ENCODE measurements at regions of chr5 and their contacts with region 1.

Region 1: GRCh38 chr5:39194466-39195136 is 24.8 kb downstream of the FYB1 start:
- DNase-seq: peak; percentile 52
- ATAC-seq: peak; percentile 24
- H3K4me3 Mint-ChIP-seq: peak overlapping the region; percentile 72
- H3K27ac Mint-ChIP-seq: peak overlapping the region; percentile 96
- H3K4me1 Mint-ChIP-seq: peaks cover 74% of the 10 kb centered on the region
- H3K27me3 Mint-ChIP-seq: no peaks in the 10 kb centered on the region

Region 2: GRCh38 chr5:38707352-38708210 is 487.0 kb before region 1 on chr5:
- CTCF ChIA-PET with region 1: no interaction called
- POLR2A ChIA-PET with region 1: no interaction called
- intact Hi-C with region 1: no loop called
- DNase-seq: no peak
- ATAC-seq: no peak
- H3K4me3 Mint-ChIP-seq: no peak overlapping the region
- H3K27ac Mint-ChIP-seq: no peak overlapping the region
- H3K4me1 Mint-ChIP-seq: no peaks in the 10 kb centered on the region
- H3K27me3 Mint-ChIP-seq: peaks cover 2% of the 10 kb centered on the region

Region 3: DNA sequence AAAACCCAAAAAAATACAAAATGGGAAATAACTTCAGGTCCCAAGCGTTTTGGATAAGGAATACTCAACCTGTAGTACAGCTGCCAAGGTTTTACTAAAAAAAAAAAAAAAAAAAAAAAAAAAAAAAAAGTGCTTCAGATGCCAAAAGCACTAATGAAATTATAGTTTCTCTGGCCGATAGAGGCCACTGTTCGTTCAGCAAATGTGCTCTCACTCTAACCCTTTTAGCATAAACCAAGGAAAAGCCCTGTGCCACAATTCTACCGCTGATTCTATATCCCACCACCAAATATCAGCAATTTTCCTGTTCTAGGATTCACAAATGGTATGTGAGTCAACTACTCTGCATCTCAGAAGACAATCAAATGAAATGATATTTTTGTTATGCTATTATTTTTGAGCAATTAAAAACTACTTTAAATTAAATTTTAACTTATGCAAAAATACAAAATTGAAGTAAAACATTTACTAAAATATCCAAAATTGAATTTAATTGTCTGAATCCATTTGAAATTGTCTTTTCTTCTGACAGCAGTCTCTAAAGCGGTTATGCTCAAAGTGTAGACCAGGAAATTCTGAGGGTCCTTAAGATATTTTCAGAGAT is 200.2 kb before region 1 on chr5:
- CTCF ChIA-PET with region 1: no interaction called
- POLR2A ChIA-PET with region 1: no interaction called
- intact Hi-C with region 1: loop called in 1 of 2 experiments (anchors 5 kb)
- DNase-seq: peak; percentile 31
- ATAC-seq: peak; percentile 36
- H3K4me3 Mint-ChIP-seq: no peak overlapping the region
- H3K27ac Mint-ChIP-seq: no peak overlapping the region
- H3K4me1 Mint-ChIP-seq: peaks cover 4% of the 10 kb centered on the region
- H3K27me3 Mint-ChIP-seq: no peaks in the 10 kb centered on the region

Region 4: DNA sequence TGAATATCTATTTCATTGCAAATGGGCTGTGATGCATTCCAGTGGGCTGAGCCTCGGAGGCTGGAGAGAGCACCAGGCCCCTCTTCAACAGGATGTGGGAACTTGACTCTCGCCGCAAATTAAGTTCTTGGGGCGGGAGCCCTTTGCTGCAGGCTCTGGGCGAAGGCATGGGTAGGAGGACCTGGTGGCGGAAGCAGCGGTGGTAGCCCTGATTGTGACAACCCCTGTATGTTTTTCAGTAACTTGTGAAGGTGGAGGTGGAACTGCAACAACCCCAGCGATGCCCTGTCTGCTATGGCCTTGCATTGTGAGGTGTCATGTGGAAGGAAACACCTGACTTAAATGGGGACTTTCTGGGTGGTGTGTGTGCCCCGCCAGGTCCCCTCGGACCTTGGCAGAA is 15.3 kb after region 1 on chr5:
- CTCF ChIA-PET with region 1: interaction called, 12 read pairs
- POLR2A ChIA-PET with region 1: interaction called, 3 read pairs
- intact Hi-C with region 1: loop called in 1 of 2 experiments (anchors 2 kb)
- DNase-seq: peak; percentile 87
- ATAC-seq: peak; percentile 59
- H3K4me3 Mint-ChIP-seq: peak overlapping the region; percentile 67
- H3K27ac Mint-ChIP-seq: peak overlapping the region; percentile 95
- H3K4me1 Mint-ChIP-seq: peaks cover 84% of the 10 kb centered on the region
- H3K27me3 Mint-ChIP-seq: no peaks in the 10 kb centered on the region

Region 5: GRCh38 chr5:39424736-39425637 is 230.4 kb after region 1 on chr5 and contains the start of gene DAB2:
- CTCF ChIA-PET with region 1: no interaction called
- POLR2A ChIA-PET with region 1: no interaction called
- intact Hi-C with region 1: no loop called
- DNase-seq: peak; percentile 70
- ATAC-seq: peak; percentile 88
- H3K4me3 Mint-ChIP-seq: peak within 1 kb of the TSS; percentile 68
- H3K27ac Mint-ChIP-seq: no peak within 1 kb of the TSS
- H3K4me1 Mint-ChIP-seq: no peaks in the 10 kb centered on the region
- H3K27me3 Mint-ChIP-seq: peaks cover 42% of the 10 kb centered on the region
- total RNA-seq, gene DAB2: 0.05 to 0.26 TPM

Measured in activated CD4-positive, alpha-beta T cell treated with anti-CD3 and anti-CD28 coated beads for 36 hours (primary cell).